ENCODE measurements at regions of chr6 and their contacts with region 1.

Region 1: GRCh38 chr6:13395272-13396237 is 67.2 kb upstream of the TBC1D7 start:
- DNase-seq: no peak
- H3K4me3 ChIP-seq: no peak overlapping the region
- H3K27ac ChIP-seq: no peak overlapping the region
- H3K4me1 ChIP-seq: peaks cover 0 to 3% (median 2%) of the 10 kb centered on the region in 4 experiments; a peak in 3 of 7 replicates
- H3K27me3 ChIP-seq: no peaks in the 10 kb centered on the region
- CTCF ChIP-seq: no peak
- EP300 ChIP-seq: no peak
- POLR2A ChIP-seq: no peak
- RAD21 ChIP-seq: no peak

Region 2: DNA sequence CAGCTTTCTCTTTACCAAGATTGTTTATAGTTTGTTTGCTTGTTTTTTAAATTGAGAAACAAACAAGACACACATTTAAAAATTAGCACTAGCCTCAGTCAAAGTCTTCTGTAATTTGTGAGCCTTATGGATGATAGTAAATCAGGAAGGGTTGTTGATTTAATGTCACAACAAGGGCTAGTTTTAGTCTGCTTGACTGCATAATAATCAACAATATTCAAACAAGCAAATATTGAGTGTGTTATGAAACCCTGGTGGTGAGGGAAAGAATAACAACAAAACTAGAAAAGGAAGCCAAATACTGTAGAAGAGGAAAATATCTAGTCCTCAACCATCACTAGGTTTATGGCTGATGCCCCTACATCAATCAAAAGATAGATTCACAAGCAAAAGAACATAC is 295.8 kb before region 1 on chr6:
- CTCF ChIA-PET with region 1: no interaction called
- POLR2A ChIA-PET with region 1: no interaction called
- DNase-seq: no peak
- H3K4me3 ChIP-seq: no peak overlapping the region
- H3K27ac ChIP-seq: no peak overlapping the region
- H3K4me1 ChIP-seq: peaks cover 0 to 2% (median under 1%) of the 10 kb centered on the region in 4 experiments; a peak in 2 of 7 replicates
- H3K27me3 ChIP-seq: no peaks in the 10 kb centered on the region
- CTCF ChIP-seq: peak in 1 of 3 experiments; percentile 29; a peak in 1 of 4 replicates
- EP300 ChIP-seq: no peak
- POLR2A ChIP-seq: no peak
- RAD21 ChIP-seq: no peak

Region 3: GRCh38 chr6:13383328-13384163 is 12.0 kb before region 1 on chr6:
- CTCF ChIA-PET with region 1: interaction called, 21 read pairs
- POLR2A ChIA-PET with region 1: no interaction called
- DNase-seq: no peak
- H3K4me3 ChIP-seq: no peak overlapping the region
- H3K27ac ChIP-seq: no peak overlapping the region
- H3K4me1 ChIP-seq: peaks cover 2 to 5% (median 3%) of the 10 kb centered on the region in 4 experiments; a peak in 4 of 7 replicates
- H3K27me3 ChIP-seq: no peaks in the 10 kb centered on the region
- CTCF ChIP-seq: no peak
- EP300 ChIP-seq: no peak
- POLR2A ChIP-seq: no peak
- RAD21 ChIP-seq: no peak

Region 4: GRCh38 chr6:13427801-13428582 is 32.4 kb after region 1 on chr6:
- CTCF ChIA-PET with region 1: interaction called, 12 read pairs
- POLR2A ChIA-PET with region 1: no interaction called
- DNase-seq: no peak
- H3K4me3 ChIP-seq: no peak overlapping the region
- H3K27ac ChIP-seq: no peak overlapping the region
- H3K4me1 ChIP-seq: peaks cover 15 to 31% (median 22%) of the 10 kb centered on the region in 4 experiments
- H3K27me3 ChIP-seq: no peaks in the 10 kb centered on the region
- CTCF ChIP-seq: peak in 2 of 3 experiments; percentile 40 to 48; a peak in 2 of 4 replicates
- EP300 ChIP-seq: no peak
- POLR2A ChIP-seq: no peak
- RAD21 ChIP-seq: 0 out of 4 replicates have a peak, but pooled peaks of 1 of the 2 experiments have one; percentile 4